BJ (cell line): ENCODE measurements at regions of chr21 and their contacts with region 1.

Region 1: GRCh38 chr21:33127154-33127893 is 57.4 kb downstream of the OLIG1 start:
- DNase-seq: no peak
- H3K4me3 ChIP-seq: peak overlapping the region; percentile 5; the same call in 1 of the 2 replicates
- H3K27me3 ChIP-seq: peaks cover 4% of the 10 kb centered on the region; the same call in 1 of the 2 replicates
- CTCF ChIP-seq: peak; percentile 81

Region 2: DNA sequence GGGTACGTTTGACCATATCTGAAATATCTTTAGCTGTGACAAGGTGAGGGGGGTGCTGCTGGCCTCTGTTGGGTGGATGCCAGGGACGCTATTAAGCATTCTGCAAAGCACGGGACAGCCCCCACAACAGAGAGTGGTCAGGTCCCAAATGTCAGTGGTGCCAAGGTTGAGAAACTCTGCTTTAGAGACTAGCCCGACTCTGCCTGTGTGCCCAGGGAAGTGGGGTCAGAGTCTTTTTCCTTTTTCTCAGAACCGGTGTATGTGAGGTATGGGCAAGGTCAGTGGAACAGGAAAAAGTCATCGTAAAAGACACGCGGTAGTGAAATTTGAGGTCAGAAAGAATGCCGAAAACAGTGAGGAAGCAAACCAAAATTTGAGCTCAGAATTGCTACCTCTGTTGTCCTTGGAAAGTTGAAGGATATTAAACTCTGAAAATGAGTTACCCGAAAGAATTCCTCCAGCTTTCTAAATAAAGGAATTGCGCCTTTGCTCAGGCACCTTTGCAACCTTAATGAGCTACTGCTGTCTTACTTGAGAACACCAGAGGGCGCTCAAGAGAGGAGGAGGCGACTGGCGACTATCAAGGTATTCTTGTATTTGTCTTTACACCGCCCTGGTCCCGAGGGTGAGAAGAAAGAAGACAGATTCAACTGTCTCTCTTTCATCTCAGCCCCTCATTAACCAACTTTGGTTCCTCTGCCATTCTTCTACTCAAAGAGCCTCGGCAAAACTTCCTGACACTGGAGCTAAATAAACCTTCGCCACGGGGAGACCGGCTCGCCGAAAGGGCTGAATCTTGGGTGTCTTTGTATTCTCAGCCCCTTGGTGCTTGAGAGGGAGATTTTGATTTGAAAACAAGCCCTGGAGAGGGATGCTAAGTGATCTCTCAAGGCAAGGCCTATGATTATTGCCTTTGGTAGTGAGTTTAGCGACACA is 187.0 kb before region 1 on chr21:
- CTCF ChIA-PET with region 1: interaction called, 13 read pairs
- POLR2A ChIA-PET with region 1: no interaction called
- DNase-seq: no peak
- H3K4me3 ChIP-seq: no peak overlapping the region
- H3K27me3 ChIP-seq: no peaks in the 10 kb centered on the region
- CTCF ChIP-seq: peak; percentile 82

Region 3: DNA sequence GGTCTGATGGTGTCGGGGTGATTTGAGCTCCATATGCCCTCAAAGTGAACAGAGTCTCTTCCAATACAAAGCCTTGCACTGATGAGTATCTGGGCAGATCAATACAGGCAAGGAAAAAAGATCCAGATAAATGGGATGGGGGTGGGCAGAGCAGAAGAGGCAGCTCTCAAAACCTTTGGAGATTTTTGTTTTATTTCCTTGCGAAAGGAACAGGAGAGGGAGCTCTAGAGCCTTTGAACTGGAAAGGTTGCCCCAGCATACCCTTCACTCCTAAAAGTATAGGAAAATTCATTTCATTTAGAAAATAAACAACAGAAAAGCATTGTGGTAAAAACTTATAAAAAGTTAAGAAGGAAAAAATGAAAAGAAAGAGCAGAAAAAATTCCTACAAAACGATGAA is 133.0 kb before region 1 on chr21:
- CTCF ChIA-PET with region 1: interaction called, 28 read pairs
- POLR2A ChIA-PET with region 1: no interaction called
- DNase-seq: no peak
- H3K4me3 ChIP-seq: no peak overlapping the region
- H3K27me3 ChIP-seq: peaks cover 5% of the 10 kb centered on the region
- CTCF ChIP-seq: peak; percentile 56

Region 4: GRCh38 chr21:33096426-33096825 is 30.9 kb before region 1 on chr21:
- CTCF ChIA-PET with region 1: no interaction called
- POLR2A ChIA-PET with region 1: no interaction called
- DNase-seq: no peak
- H3K4me3 ChIP-seq: no peak overlapping the region
- H3K27me3 ChIP-seq: peaks cover 4% of the 10 kb centered on the region
- CTCF ChIP-seq: no peak